AG04449 (cell line): ENCODE measurements at regions of chr12 and their contacts with region 1.

Region 1: DNA sequence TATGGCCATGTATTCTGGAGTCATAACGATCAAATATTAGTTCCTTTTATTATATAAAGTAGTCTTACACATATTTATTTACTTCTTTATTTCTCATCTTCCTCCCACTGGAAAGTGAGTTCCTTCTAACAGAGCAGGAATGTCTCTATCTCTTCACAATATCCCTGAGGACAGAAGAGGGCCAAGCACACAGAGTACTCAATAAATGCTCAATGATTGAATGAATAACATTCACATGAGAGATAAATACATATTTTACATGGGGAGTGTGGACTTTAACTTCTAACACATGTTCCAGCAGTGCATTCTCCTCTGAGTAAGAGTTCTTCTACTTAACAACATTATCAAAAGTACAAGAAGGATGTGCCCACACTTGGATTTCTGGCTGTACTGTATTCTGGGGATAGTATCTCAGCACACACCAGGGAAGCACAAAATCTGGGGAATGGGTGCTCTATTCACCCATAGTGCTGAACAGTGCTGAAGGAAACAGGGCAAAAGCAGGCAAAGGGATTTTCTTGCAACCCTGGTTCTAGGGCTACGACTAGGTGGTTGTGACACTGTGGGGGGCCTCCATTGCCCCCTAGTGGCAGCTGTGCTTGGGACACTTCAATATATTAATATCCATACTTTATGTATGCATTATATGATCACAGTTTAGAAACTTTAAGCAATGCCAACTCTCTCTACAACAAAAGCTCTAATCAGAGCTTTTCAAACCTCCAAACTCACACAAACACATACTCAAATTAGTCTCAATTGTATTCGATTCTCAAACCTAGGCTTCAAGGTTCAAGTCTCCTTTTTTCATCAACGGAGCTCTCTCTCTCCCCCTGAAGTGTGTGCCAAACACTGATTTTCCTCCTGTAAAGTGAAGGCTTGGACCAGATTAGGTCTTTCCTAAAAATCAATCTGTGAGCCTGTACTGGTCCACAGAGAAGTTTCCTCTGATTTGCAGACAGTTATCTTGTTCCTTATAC is 115.5 kb downstream of the SLC2A13 start:
- DNase-seq: no peak
- H3K4me3 ChIP-seq: no peak overlapping the region
- CTCF ChIP-seq: peak; percentile 69

Region 2: DNA sequence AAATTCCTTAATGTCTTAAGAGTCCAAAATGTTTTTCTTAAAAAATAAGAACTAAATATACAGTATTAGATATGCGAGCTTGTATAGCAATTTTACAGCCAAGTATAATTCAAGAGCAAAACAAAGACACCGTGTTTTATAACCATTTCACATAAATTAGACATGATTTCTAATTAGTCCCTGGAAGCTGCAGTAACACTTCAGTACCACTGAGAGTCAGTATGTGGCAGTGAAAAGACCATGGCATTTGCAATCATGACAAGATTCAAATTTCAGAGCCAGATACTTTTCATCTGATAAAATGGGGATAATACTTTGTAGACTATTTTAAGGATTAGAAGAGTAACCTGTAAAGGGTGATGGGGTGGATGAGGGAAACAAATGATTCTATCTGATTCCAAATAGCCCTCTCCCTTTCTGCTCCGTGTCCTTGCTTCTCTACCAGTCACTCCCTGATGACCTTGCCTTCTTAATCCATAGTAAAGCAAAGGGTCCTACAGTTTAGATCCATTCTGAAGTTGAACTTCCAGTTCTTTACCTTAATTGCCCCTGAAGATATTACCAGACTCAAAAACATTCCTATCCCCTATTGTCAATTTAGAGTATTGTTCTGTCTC is 225.4 kb before region 1 on chr12:
- CTCF ChIA-PET with region 1: interaction called, 13 read pairs
- POLR2A ChIA-PET with region 1: no interaction called
- DNase-seq: peak; percentile 7
- H3K4me3 ChIP-seq: no peak overlapping the region
- CTCF ChIP-seq: peak; percentile 60

Region 3: DNA sequence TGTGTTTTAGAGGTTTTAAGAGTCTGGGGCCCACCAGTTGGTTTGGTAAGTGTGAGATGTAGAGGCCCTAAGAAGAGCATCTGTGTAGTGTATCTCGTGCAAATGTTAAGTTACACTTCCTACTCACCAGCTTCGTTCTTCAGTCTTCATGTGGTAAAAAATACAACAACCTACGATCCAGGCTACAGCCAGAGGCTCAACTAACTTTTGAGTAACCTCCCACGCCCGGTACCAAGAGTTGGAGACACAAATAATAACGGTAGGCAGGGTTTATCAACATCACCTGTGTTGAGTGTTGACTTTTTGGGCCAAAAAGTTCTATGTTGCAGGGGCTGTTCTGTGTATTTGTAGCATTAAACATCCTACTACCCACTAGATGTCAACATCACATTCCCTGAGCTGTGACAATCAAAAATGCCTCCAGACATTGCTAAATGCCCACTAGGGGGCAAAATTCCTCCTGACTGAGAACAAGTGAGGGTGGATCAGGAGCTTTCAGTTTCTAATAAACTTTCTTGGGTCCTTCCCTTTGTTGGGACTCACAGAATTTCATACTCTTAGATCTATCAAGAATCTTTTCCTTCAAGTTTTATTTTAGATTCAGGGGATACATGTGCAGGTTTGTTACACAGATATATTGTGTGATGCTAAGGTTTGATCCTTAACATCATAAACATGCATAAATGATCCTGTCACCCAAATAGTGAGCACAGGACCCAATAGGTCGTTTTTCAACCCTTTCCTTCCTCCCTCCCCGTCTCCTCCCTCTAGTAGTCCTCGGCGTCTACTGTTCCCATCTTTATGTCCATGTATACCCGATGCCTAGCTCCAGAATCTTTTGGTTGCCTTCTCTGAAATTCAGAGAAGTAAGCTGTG is 20.7 kb after region 1 on chr12:
- CTCF ChIA-PET with region 1: interaction called, 18 read pairs
- POLR2A ChIA-PET with region 1: no interaction called
- DNase-seq: peak; percentile 19
- H3K4me3 ChIP-seq: no peak overlapping the region; the same call in 1 of the 2 replicates
- CTCF ChIP-seq: peak; percentile 66

Region 4: DNA sequence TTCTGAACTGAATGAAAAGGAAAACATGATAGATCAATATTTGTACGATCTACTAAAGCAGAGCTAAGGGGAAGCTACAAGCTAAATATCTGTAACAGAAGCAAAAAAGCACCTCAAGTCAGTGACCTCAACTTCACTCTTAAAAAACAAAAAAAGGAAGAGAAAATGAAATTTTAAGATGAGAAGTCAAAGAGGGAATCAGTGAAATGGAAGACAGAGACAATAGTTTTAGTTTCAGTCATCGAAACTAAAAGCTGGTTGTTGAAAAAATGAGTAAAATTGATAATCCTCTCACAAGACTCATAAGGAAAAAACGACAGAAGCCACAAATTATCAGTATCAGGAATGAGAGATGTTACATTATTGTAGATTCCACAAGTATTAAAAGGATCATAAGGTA is 127.4 kb after region 1 on chr12:
- CTCF ChIA-PET with region 1: no interaction called
- POLR2A ChIA-PET with region 1: no interaction called
- DNase-seq: no peak
- H3K4me3 ChIP-seq: no peak overlapping the region
- CTCF ChIP-seq: no peak

Region 5: GRCh38 chr12:40253936-40254335 is 263.5 kb after region 1 on chr12:
- CTCF ChIA-PET with region 1: no interaction called
- POLR2A ChIA-PET with region 1: no interaction called
- DNase-seq: no peak
- H3K4me3 ChIP-seq: no peak overlapping the region
- CTCF ChIP-seq: no peak